Activated CD4-positive, alpha-beta T cell treated with anti-CD3 and anti-CD28 coated beads, Interleukin-2, amount 10 ng/mL, durations not matched to agents 24 days and 14 days (primary cell): ENCODE measurements at regions of chr21 and their contacts with region 1.

Region 1: DNA sequence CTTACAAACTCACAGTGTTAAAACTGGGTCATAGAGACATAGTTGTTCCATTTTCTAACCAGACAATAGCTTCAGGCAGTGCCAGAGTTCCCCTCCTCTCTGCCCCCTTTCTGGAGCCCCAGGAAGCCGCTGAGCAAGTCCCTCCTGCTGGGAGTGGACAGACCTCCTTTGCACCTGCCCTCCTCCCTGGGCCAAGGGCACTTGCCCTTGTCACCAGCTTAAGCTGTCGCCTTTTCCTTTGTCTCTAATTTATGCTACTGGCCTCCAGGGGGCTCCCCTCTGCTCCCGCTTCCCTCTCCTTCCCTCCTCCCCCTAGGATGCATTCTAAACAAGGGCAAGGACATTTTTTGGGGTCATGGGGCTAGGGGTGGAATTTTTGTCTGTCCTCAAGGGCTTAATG is 182.4 kb downstream of the MIS18A start:
- DNase-seq: no peak
- H3K4me3 Mint-ChIP-seq: no peak overlapping the region
- H3K27ac Mint-ChIP-seq: no peak overlapping the region
- H3K4me1 Mint-ChIP-seq: no peaks in the 10 kb centered on the region
- H3K27me3 Mint-ChIP-seq: no peaks in the 10 kb centered on the region

Region 2: DNA sequence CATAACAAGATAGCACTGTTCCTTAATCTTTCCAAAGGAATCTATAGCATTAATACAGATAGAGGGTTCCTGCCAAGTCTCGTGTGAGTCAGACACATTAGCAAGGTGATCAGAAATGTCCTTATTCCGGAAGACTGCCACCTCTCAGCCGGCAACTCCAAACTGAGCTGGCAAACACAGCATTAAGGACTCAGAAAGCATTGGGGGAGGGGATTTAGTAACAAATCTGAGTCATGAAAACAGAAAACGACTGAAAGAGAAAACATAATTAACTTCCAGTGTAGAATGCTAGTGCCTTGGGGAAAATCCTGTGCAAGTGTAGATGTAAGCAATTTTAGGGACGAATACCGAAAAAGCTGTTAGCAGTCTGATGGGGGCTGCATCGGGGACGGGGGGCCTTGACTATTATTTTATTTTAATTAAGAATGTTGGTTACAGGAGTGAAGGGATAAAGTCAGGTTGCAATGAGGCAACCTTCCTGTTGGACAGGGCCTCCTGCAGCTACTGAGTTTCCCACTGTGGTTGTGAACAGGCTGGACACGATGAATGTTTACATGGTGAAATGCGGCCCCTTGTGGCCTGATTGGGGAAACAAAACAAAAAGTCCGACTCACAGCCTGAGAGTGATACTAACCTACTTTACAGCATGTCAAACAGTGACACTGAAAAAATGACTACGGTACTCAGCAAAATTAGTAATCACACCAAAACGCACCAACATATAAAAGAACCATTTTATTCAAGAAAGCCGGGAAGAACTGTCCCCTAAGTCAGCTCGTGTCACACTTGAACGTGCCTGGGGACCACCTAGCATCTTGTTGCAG is 161.8 kb after region 1 on chr21:
- intact Hi-C with region 1: loop called (anchors 5 kb)
- DNase-seq: peak; percentile 78
- H3K4me3 Mint-ChIP-seq: no peak overlapping the region
- H3K27ac Mint-ChIP-seq: no peak overlapping the region
- H3K4me1 Mint-ChIP-seq: peaks cover 2% of the 10 kb centered on the region
- H3K27me3 Mint-ChIP-seq: peaks cover 6% of the 10 kb centered on the region